B cell (primary cell): ENCODE measurements at regions of chr4 and their contacts with region 1.

Region 1: DNA sequence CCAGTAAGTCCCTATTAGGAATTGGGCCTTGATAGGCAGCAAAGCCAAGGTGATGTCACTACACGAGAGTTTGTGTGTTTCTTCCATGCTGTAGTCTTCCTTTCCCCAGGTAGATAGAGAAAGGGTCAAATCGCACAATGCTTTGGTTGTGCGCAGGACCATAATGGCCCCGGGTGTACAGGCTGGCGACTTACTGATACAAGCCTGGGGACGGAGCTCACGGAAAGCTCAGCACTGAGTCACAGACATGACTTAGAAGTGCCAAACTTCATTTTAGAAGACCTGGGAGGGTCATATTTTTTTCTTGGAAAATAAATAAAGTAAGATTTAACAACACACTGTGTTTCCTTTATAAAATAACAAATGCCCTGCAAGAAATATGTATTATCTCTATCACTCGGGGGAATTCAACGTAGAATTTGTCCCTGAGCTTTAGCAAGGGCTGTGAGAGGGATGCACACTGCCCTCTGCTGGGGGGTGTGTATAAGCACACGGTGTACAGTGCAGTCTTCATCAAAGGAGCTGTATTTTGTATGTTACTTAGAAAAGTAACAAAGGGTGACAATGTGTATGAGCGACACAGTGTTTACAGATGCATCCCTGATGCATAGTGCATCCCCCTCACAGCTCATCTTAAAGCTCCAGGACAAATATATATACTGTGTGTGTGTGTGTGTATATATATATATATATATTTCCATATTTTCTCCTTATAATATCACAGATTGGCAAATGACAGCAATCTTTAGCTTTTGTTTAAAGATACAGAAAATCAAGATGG is 254.5 kb upstream of the VEGFC start:
- DNase-seq: peak; percentile 43
- ATAC-seq: peak; percentile 69
- H3K4me3 ChIP-seq: no peak overlapping the region
- H3K4me3 Mint-ChIP-seq: no peak overlapping the region
- H3K27ac ChIP-seq: no peak overlapping the region
- H3K27ac Mint-ChIP-seq: no peak overlapping the region
- H3K4me1 ChIP-seq: no peaks in the 10 kb centered on the region
- H3K4me1 Mint-ChIP-seq: no peaks in the 10 kb centered on the region
- H3K27me3 ChIP-seq: no peaks in the 10 kb centered on the region
- H3K27me3 Mint-ChIP-seq: no peaks in the 10 kb centered on the region
- CTCF ChIP-seq: peak; percentile 80

Region 2: DNA sequence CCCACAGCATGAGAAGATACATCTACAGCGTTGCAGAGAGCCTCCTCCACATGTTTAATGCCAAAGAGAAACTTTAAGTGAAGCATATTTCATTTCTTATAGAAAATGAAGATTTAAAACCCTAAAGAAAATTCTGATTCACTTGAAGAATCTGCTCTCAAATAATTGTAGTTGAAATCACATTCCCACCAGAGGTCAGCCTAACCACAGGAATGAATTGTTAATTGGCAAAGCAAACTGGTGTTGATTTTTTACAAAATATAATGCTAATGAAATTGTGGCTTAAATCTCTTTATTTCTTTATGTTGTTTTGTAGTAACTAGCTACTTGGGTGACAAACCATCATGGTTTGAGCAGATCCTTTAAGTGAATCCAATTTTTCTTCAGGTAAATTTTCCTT is 1012.8 kb before region 1 on chr4:
- CTCF ChIA-PET with region 1: interaction called, 11 read pairs
- POLR2A ChIA-PET with region 1: no interaction called
- intact Hi-C with region 1: no loop called
- DNase-seq: peak; percentile 53
- ATAC-seq: no peak
- H3K4me3 ChIP-seq: no peak overlapping the region
- H3K4me3 Mint-ChIP-seq: no peak overlapping the region
- H3K27ac ChIP-seq: no peak overlapping the region
- H3K27ac Mint-ChIP-seq: no peak overlapping the region
- H3K4me1 ChIP-seq: peaks cover 0 to 7% of the 10 kb centered on the region in 2 donors
- H3K4me1 Mint-ChIP-seq: peaks cover 2% of the 10 kb centered on the region
- H3K27me3 ChIP-seq: no peaks in the 10 kb centered on the region
- H3K27me3 Mint-ChIP-seq: no peaks in the 10 kb centered on the region
- CTCF ChIP-seq: peak; percentile 53

Region 3: DNA sequence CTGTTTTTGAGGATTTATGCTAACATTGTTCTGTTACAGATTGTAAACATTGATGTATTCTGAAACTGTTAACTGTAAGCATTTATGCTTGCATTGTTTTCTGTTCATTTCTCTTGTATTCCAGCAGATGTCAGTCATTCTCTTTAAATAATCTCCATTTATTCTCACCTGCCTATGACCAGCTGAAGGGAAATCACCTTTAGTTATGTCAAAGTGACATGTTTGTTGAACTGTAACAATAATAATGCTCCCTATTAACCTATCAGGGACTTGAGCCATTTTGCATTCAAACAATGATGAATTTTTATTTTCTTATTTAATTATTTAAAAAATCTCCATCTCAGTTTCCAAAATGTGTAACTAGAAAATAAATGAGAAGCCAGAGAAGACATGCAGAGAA is 669.5 kb before region 1 on chr4:
- CTCF ChIA-PET with region 1: interaction called, 10 read pairs
- POLR2A ChIA-PET with region 1: no interaction called
- intact Hi-C with region 1: loop called (anchors 5 kb)
- DNase-seq: peak; percentile 6
- ATAC-seq: no peak
- H3K4me3 ChIP-seq: no peak overlapping the region
- H3K4me3 Mint-ChIP-seq: no peak overlapping the region
- H3K27ac ChIP-seq: no peak overlapping the region
- H3K27ac Mint-ChIP-seq: no peak overlapping the region
- H3K4me1 ChIP-seq: no peaks in the 10 kb centered on the region
- H3K4me1 Mint-ChIP-seq: no peaks in the 10 kb centered on the region
- H3K27me3 ChIP-seq: no peaks in the 10 kb centered on the region
- H3K27me3 Mint-ChIP-seq: peaks cover 17% of the 10 kb centered on the region
- CTCF ChIP-seq: peak; percentile 37